ENCODE measurements at regions of chr5 and their contacts with region 1.

Region 1: DNA sequence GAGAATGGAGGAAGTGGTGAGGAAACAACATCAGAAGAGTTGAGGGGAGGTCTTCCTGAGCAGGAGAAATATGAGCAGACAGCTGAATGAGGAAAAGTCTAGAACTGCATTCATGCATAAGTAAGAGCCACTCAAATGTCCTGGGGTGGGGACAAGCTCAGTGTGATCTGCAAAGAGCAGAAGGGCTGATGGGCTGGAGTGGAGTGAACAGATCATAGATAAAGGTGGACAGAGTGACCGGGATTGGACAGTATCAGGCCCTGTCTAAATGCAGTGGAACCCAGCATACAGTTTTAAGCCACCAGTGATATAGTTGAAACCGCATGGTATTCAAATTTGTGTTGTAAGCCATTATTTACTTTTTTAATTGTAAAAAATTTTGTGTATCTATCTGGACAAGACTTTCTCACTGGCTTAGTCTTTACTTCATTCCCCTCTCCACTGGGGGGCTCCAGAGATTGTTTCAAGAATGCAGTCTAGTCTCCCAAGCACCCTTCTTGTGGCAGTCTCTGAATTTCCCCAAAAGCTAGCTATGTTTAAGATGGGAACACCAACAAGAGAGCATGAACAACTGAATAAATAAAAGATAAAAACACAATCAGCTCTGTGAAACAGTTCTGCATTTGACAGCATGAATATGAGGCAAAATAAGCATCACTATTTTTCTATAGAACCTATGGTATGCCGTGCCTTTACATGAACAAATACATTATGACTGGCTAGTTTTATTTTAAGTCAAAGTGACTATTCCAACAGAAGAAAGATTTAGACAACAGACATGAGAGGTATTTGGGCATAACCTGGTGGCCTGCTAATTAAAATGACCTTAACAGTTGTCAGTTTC is 10.7 kb upstream of the STK32A start:
- DNase-seq: peak in 2 of 4 donors; percentile 23 to 54
- ATAC-seq: peak; percentile 94
- H3K4me3 ChIP-seq: no peak overlapping the region
- H3K27ac ChIP-seq: no peak overlapping the region
- H3K4me1 ChIP-seq: no peaks in the 10 kb centered on the region
- H3K27me3 ChIP-seq: no peaks in the 10 kb centered on the region
- CTCF ChIP-seq: peak; percentile 54 to 59

Region 2: GRCh38 chr5:146722361-146722791 is 501.8 kb before region 1 on chr5:
- intact Hi-C with region 1: no loop called
- DNase-seq: peak in 2 of 4 donors; percentile 1 to 21
- ATAC-seq: no peak
- H3K4me3 ChIP-seq: no peak overlapping the region
- H3K27ac ChIP-seq: no peak overlapping the region
- H3K4me1 ChIP-seq: no peaks in the 10 kb centered on the region
- H3K27me3 ChIP-seq: no peaks in the 10 kb centered on the region
- CTCF ChIP-seq: no peak

Region 3: DNA sequence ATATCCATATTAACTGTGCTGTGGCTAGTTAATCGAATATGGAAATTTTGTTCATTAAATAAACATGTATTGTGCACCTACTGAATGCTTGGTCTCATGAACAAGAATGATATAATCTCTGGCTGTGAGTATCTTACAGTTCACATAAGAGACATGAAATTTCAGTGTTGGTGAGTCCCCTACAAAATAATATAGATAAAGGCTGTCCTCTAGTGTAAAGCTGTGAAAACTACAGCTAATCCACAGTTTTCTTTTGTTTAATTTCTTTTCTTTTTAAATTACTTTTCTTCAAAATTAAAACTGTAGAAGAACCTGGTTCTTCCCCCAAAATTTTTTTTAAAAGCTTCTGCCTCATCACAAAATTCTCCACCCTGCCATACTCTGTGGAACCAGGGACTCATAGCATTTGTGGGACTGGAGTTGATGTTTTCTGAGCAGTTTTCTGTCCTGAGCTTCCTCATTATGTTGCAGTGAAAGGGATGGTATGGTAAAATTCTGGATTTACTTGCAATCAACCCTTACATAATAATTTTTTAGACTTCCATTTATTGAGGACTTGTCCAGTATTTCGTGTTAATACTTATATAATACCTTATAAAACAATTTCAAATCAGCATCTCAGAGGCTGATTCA is 145.7 kb after region 1 on chr5:
- intact Hi-C with region 1: loop called in 1 of 2 experiments (anchors 10 kb)
- DNase-seq: no peak
- ATAC-seq: peak; percentile 78
- H3K4me3 ChIP-seq: no peak overlapping the region
- H3K27ac ChIP-seq: no peak overlapping the region
- H3K4me1 ChIP-seq: no peaks in the 10 kb centered on the region
- H3K27me3 ChIP-seq: no peaks in the 10 kb centered on the region
- CTCF ChIP-seq: peak in 1 of 2 donors; percentile 56

Region 4: GRCh38 chr5:147576646-147577535 is 352.7 kb after region 1 on chr5:
- intact Hi-C with region 1: loop called in 1 of 2 experiments (anchors 10 kb)
- DNase-seq: peak in 2 of 4 donors; percentile 42 to 58
- ATAC-seq: peak; percentile 93
- H3K4me3 ChIP-seq: no peak overlapping the region
- H3K27ac ChIP-seq: no peak overlapping the region
- H3K4me1 ChIP-seq: no peaks in the 10 kb centered on the region
- H3K27me3 ChIP-seq: no peaks in the 10 kb centered on the region
- CTCF ChIP-seq: peak; percentile 84 to 87

Measured in left lung (tissue), 14 donors.